Cardiac septum (tissue), 1 donor: ENCODE measurements at regions of chr20 and their contacts with region 1.

Region 1: DNA sequence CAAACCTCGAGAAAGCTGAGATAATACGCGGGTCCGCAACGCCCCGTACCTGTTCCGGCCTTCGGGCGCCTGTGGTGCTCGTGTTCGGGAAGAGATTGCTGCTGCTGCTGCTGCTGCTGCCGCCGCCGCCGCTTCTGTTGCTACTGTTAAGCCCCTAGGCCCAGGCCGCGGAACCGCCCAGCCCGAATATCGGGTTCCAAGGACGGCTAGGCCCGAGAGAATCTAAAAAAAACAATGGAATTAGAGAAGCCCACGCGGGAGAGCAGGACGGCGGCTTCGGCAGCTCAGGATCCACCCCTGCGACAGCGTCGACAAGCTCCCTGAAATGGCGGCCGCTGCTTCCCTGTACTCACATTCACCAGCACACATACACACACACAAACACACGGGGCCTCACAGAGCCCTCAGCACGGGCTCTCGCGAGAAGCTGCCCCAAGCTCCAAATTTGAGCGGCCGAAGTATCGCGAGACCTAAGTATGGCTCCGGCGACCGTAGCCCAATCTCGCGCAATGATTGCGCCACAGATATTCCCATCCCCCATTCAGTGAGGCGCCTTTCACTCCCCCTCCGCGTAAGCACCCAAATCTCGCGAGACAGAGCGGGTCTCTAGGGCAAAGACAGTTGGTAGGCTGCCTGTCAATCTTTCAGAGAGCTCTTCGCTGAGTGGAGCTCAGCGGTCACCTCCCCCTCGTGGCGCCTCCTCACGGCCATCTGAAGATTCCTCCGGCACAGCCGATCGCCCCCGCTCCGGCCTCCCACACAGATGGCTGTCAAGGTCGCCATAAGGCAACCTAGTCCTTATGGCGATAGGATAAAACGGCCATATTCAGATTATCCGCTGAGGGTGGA is at the start of gene RBM39:
- DNase-seq: peak; percentile 100
- total RNA-seq, gene RBM39: 167 TPM

Region 2: GRCh38 chr20:35664544-35665221 is 77.4 kb before region 1 on chr20 and contains the starts of genes CPNE1 and RBM12:
- intact Hi-C with region 1: loop called (anchors 2 kb)
- DNase-seq: peak; percentile 97
- total RNA-seq, gene CPNE1: 77.9 TPM
- total RNA-seq, gene RBM12: 44.4 TPM

Region 3: DNA sequence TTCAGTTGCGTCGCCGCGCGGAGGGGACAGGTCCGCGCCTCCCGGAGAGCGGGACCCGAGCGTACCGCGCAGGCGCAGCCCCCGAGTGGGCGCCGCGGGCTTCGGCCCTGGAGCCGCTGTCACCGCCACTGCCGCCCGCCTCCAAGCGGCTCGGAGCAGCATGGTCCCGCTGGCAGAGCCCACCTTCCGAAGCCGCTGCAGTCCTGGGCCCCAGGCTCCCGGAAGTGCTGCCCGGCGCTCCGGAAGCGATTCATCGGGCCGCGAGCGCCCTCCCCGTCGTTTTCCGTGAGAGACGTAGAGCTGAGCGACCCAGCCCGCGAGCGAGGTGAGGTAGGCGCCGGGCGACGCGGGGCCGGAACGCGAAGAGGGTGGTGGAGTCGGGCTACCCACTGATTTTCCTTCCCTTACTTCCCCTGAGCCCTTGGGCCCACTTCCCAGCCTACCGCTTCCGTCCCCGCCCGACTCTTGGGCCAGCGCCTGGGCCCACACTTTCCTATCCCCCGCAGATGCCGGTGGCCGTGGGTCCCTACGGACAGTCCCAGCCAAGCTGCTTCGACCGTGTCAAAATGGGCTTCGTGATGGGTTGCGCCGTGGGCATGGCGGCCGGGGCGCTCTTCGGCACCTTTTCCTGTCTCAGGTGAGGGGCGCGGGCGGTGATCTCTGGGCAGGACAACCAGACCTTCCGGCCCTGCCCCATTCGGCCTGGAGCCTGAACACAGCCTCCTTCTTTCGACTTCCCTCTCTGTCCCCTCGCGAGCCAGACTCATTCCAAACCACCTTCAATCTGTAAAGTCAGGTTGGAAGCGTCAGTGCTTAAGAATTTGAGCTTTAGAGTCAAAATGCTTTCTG is 42.8 kb before region 1 on chr20 and contains the starts of genes NFS1 and ROMO1:
- intact Hi-C with region 1: loop called (anchors 5 kb)
- DNase-seq: peak; percentile 94
- total RNA-seq, gene NFS1: 55.0 TPM
- total RNA-seq, gene ROMO1: 176 TPM

Region 4: DNA sequence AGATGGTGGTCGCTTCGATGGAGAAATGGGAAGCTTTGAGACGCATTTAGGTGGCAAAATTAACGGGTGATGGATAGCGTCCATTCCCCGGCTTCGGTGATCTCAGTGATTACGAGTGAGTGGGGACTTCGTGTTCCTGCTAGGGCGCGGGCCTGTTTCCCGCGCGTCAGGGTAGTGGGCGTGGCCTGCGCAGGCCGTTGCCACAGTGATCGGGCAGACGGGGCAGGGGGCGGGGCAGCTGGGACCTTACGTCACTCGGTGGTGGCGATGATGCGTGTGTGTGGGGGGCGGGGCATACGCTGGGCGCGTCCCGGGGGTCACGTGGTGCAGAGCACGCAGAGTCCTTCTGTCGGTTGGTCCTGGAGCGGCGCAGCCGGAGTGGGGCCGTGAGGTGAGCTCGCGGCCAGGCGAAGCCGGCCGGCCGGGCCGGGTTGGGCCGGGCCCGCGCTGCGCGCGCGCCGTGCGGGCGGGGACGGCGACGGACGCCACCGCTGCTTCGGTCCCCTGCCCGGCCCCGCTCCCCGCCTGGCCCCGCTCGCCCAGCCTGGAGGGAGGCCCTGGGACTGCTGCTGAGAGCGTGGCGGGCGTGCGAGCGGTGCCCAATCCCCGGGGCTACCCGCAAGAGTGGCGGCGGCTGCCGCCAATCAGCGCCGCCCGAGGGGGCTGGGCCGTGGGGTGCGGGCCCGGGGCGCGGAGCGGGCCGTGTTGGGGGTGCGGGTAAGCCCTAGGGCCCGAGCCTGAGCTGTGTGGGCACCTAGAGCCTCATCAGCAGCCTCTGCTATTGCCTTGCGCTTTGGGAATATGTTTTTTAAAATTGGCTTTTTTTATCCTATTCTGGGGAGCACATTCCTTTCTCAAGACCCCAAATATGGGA is 29.8 kb after region 1 on chr20 and contains the start of gene PHF20:
- intact Hi-C with region 1: loop called (anchors 1 kb)
- DNase-seq: peak; percentile 100
- total RNA-seq, gene PHF20: 28.9 TPM

Region 5: DNA sequence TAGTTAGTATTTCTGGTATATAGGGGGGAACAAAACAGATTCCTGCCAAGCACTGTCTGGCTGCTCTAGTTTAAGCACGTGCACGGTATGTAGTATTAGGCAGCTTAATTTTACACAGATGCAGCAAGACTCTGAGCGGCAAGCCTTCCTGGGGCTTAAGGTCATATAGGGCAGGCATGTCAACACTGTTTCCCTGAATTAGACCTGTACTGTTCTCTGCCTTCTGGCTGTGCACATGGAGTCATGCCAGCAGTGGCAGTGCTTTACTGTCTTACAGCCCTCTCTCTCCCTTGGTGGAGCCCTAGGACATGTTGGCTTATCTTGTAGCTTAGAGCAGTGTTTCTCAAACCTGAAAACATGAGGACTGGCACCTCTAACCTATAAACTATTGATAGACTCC is 86.3 kb after region 1 on chr20:
- intact Hi-C with region 1: no loop called
- DNase-seq: no peak